ENCODE measurements at regions of chr19 and their contacts with region 1.

Region 1: DNA sequence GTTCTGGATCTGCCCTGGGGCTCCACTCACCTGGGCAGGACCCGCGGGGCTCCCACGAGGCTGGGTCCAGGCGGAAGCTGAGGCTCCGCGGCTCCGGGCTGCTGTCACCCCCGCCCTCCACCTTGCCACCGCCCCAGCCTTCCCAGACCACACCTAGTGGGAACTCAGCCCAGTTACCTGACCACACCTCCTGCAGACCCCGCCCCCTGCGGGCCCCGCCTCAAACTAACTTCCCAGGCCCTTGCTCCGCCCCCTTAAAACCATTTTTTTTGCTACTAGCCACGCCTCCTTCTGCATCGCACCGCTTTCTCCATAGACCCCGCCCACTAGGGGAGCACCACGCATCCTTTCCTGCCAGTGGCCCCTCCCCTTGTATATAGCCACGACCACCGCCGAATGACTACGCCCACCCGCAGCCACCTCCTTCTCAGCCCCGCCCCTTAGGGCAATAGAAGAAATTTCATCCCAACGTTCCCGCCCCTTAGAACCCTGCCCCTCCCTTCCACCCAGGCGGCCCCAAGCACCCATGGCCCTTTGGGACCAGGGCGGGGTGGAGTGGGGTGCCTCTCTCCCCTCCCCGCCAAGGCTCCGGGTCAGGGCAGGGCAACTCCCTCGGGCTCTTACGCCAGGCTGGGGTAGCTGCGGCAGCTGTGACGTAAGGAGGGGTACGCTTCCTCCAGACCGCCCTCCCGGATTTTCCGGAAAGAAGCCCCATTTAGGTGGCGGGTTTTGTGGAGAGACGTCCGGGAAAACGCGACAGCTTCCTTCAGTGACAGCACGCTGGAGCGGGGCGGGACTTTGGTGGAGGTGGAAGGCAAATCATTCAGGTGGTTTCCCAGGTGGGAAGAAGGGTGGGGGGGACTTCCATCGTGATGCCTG is at the start of gene SH2D3A:
- DNase-seq: peak; percentile 98
- ATAC-seq: peak; percentile 69
- H3K4me3 ChIP-seq: peak within 1 kb of the TSS; percentile 36 to 81 (median 68)
- H3K4me3 Mint-ChIP-seq: peak within 1 kb of the TSS; percentile 93
- H3K27ac ChIP-seq: peak within 1 kb of the TSS; percentile 89 to 96
- H3K27ac Mint-ChIP-seq: peak within 1 kb of the TSS; percentile 95
- H3K4me1 ChIP-seq: peaks cover 28 to 46% of the 10 kb centered on the region in 2 donors
- H3K4me1 Mint-ChIP-seq: peaks cover 47% of the 10 kb centered on the region
- H3K27me3 ChIP-seq: no peaks in the 10 kb centered on the region
- H3K27me3 Mint-ChIP-seq: no peaks in the 10 kb centered on the region
- CTCF ChIP-seq: no peak
- total RNA-seq, gene SH2D3A: 33.5 and 36.1 TPM in 2 replicates

Region 2: DNA sequence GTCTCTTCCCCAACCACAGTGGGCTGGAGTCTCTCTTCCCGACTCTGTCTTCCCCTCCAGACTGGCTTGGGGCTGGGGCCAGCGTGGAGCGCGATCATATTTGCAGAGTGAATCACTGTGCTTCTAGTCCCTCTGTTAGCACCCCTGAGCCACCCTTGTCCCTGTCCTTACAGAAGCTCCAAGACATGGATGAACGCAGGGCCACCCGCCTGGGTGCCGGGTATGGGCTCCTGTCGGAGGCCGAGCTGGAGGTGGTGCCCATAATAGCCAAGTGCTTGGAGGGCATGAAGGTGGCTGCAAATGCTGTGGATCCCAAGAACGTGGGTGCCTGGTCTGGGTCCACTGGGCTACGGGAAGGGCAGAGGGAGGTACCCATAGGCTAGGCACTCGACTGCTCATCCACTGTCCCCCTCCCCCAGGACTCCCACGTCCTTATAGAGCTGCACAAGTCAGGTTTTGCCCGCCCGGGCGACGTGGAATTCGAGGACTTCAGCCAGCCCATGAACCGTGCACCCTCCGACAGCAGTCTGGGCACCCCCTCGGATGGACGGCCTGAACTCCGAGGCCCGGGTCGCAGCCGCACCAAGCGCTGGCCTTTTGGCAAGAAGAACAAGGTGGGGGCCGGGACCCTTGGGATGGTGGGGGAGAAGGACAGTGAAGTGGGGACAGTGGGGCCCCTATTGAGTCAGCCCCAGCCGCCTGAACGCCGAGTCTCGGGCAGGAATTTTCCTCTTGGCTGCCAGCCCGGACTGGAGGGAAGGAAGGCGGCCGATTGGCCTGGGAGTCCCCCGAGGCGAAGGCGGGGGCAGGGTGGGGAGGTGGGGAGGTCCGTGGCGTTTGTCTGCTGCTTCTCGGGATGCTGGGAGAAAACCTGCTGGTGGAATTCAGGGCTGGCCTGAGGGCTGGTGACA is 23.0 kb before region 1 on chr19:
- CTCF ChIA-PET with region 1: interaction called, 41 read pairs
- POLR2A ChIA-PET with region 1: interaction called, 17 read pairs
- intact Hi-C with region 1: loop called (anchors 1 kb)
- DNase-seq: no peak
- ATAC-seq: no peak
- H3K4me3 ChIP-seq: no peak overlapping the region
- H3K4me3 Mint-ChIP-seq: no peak overlapping the region
- H3K27ac ChIP-seq: no peak overlapping the region
- H3K27ac Mint-ChIP-seq: no peak overlapping the region
- H3K4me1 ChIP-seq: peaks cover 15 to 20% of the 10 kb centered on the region in 2 donors
- H3K4me1 Mint-ChIP-seq: peaks cover 9% of the 10 kb centered on the region
- H3K27me3 ChIP-seq: no peaks in the 10 kb centered on the region
- H3K27me3 Mint-ChIP-seq: no peaks in the 10 kb centered on the region
- CTCF ChIP-seq: no peak

Region 3: GRCh38 chr19:6753178-6754031 is 14.2 kb before region 1 on chr19:
- CTCF ChIA-PET with region 1: interaction called, 12 read pairs
- POLR2A ChIA-PET with region 1: interaction called, 6 read pairs
- intact Hi-C with region 1: loop called (anchors 1 kb)
- DNase-seq: peak; percentile 92
- ATAC-seq: peak; percentile 91
- H3K4me3 ChIP-seq: peak overlapping the region in 4 of 5 experiments; percentile 41 to 65 (median 58)
- H3K4me3 Mint-ChIP-seq: peak overlapping the region; percentile 94
- H3K27ac ChIP-seq: peak overlapping the region in 1 of 2 donors; percentile 35
- H3K27ac Mint-ChIP-seq: peak overlapping the region; percentile 96
- H3K4me1 ChIP-seq: peaks cover 14 to 29% of the 10 kb centered on the region in 2 donors
- H3K4me1 Mint-ChIP-seq: peaks cover 26% of the 10 kb centered on the region
- H3K27me3 ChIP-seq: no peaks in the 10 kb centered on the region
- H3K27me3 Mint-ChIP-seq: no peaks in the 10 kb centered on the region
- CTCF ChIP-seq: peak; percentile 68

Measured in B cell (primary cell).